ENCODE measurements at regions of chr14 and their contacts with region 1.

Region 1: DNA sequence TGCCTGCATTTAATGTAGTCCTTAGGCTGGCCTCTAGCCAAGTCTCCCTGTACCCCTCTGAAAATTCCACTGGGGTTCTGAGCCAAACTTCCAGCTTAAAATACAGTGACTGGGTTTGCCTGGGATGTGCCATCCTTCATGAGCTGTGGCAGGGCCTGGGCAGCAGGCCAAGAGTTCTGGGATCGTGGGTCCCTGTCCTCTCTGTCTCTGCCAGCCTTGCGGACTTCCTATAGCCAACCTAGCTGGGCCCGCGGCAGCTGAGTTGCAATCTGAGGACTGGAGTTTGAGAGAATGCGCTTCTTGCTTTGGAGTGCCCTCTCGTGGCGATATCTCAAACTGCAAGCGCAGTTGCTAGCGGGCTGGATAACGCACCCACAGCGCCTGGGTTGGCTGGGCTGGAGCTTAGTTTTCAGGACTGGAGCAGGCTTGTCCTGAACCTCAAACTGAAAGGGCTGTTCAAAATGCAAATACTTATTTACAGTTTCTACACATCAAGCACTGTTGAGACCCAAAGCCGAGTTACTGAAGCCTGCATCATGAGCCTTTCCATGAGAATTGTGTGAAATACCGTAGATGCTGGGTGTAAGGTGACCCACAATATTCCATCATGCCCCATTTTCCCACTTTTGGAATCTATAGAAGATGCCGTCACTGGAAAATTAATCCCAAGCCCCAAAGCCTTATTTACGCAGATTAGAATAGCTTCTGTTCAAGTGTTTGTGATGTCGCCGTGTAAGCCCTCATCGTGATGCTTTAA is 7.3 kb upstream of the IFI27L2 start:
- DNase-seq: peak; percentile 95
- H3K4me3 Mint-ChIP-seq: no peak overlapping the region
- H3K27ac Mint-ChIP-seq: no peak overlapping the region
- H3K4me1 Mint-ChIP-seq: peaks cover 2% of the 10 kb centered on the region
- H3K27me3 Mint-ChIP-seq: no peaks in the 10 kb centered on the region

Region 2: DNA sequence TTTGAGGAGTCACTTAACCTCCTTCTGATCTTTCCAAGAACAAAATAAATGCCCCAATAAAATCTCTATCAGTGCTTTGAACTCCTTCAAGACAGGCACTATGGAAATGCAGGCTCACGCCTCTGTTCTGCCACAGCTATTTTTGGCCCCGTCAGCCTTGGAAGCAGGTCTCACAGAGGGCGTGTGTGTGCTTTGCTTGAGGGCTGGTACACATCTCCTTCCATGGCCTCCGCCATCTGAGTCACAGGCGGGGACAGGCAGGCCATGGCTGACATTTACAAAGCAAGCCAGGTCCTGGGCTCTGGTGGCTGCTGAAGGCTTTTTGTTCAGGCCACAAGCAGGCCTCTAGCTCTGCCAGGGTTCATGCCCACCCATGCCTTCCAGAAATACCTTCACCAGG is 364.5 kb before region 1 on chr14:
- CTCF ChIA-PET with region 1: no interaction called
- intact Hi-C with region 1: no loop called
- DNase-seq: no peak
- H3K4me3 Mint-ChIP-seq: no peak overlapping the region
- H3K27ac Mint-ChIP-seq: no peak overlapping the region
- H3K4me1 Mint-ChIP-seq: no peaks in the 10 kb centered on the region
- H3K27me3 Mint-ChIP-seq: no peaks in the 10 kb centered on the region

Region 3: GRCh38 chr14:94051115-94051514 is 85.6 kb before region 1 on chr14:
- CTCF ChIA-PET with region 1: interaction called, 11 read pairs
- intact Hi-C with region 1: no loop called
- DNase-seq: no peak
- H3K4me3 Mint-ChIP-seq: no peak overlapping the region
- H3K27ac Mint-ChIP-seq: no peak overlapping the region
- H3K4me1 Mint-ChIP-seq: peaks cover 2% of the 10 kb centered on the region
- H3K27me3 Mint-ChIP-seq: no peaks in the 10 kb centered on the region

Region 4: DNA sequence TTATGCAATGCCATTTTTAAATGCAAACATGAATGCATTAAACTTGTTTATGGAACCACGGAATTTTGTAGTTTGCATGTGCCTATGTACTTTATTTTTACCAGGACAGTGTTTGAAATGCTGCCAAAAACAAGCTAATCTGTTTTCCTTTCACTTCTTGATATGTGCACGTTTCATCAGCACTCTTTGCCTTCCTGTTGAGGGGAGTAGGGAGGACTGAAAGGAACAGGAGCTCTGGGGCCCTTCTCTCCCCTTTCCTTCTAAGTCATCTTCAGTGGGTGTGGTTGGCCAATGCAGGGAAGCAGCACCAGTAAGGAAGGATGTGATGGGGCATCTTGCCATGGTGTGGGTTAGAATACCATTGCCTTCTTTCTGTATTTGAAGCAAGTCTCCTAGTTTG is 25.2 kb after region 1 on chr14:
- CTCF ChIA-PET with region 1: interaction called, 26 read pairs
- intact Hi-C with region 1: no loop called
- DNase-seq: peak; percentile 32
- H3K4me3 Mint-ChIP-seq: no peak overlapping the region
- H3K27ac Mint-ChIP-seq: peak overlapping the region; percentile 38
- H3K4me1 Mint-ChIP-seq: peaks cover 74% of the 10 kb centered on the region
- H3K27me3 Mint-ChIP-seq: peaks cover 2% of the 10 kb centered on the region

Region 5: GRCh38 chr14:94180655-94181271 is 44.0 kb after region 1 on chr14:
- CTCF ChIA-PET with region 1: interaction called, 134 read pairs
- intact Hi-C with region 1: loop called (anchors 1 kb)
- DNase-seq: no peak
- H3K4me3 Mint-ChIP-seq: peak overlapping the region; percentile 31
- H3K27ac Mint-ChIP-seq: peak overlapping the region; percentile 9
- H3K4me1 Mint-ChIP-seq: peaks cover 45% of the 10 kb centered on the region
- H3K27me3 Mint-ChIP-seq: no peaks in the 10 kb centered on the region

Region 6: GRCh38 chr14:94485944-94486841 is 349.4 kb after region 1 on chr14:
- CTCF ChIA-PET with region 1: interaction called, 31 read pairs
- intact Hi-C with region 1: loop called (anchors 1 kb)
- DNase-seq: peak; percentile 52
- H3K4me3 Mint-ChIP-seq: no peak overlapping the region
- H3K27ac Mint-ChIP-seq: no peak overlapping the region
- H3K4me1 Mint-ChIP-seq: peaks cover 4% of the 10 kb centered on the region
- H3K27me3 Mint-ChIP-seq: peaks cover 21% of the 10 kb centered on the region